ENCODE measurements at regions of chr9 and their contacts with region 1.

Region 1: DNA sequence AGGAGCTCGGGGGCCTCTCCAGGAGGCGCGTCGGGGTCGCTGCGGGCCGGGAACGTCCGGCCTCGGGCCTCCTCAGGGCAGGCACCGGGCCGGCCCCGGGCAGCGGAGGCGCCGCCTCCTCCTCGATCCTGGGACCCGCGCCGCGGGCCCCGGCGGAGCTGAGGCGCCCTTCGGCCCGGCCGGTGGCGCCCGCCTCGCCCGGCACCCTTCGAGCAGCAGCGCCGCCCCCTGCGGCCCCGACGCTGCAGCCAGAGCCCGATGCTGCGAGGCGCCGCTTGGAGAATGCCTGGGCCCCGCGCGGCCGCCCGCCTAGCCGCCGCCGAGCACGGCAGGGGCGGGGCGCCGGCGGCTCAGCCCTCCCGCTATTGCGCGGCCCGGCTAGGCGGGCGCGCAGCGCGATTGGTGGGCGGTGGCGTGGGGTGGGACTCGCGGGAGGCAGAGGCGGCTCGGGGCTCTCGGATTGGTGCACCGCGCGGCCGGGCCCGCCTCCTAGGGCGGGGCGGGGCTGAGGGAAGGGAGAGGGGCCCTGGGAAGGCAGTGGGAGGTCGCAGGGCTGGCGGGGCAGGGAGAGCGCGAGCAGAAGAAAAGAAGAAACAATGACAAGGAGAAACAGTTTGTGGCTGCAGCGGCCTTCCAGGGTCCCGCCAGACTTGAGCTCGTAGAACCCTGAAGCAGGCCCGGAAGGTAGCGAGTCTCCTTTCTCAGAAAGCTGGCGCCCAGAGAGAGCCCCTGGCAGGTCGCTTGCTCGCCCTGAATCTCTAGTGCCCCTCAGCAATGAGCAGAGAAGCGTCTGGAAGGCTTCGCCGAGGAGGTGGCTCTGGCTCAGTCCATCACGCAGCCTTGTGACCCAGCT is at the start of gene EEIG1:
- DNase-seq: peak; percentile 95 to 99 (median 97)
- ATAC-seq: peak; percentile 88
- H3K4me3 ChIP-seq: peak within 1 kb of the TSS; percentile 67
- H3K4me3 Mint-ChIP-seq: peak within 1 kb of the TSS; percentile 96
- H3K27ac ChIP-seq: peak within 1 kb of the TSS; percentile 53 to 57
- H3K27ac Mint-ChIP-seq: peak within 1 kb of the TSS; percentile 99
- H3K4me1 ChIP-seq: peaks cover 58% of the 10 kb centered on the region
- H3K4me1 Mint-ChIP-seq: peaks cover 47% of the 10 kb centered on the region
- H3K27me3 ChIP-seq: no peaks in the 10 kb centered on the region
- H3K27me3 Mint-ChIP-seq: no peaks in the 10 kb centered on the region
- CTCF ChIP-seq: no peak
- total RNA-seq, gene EEIG1: 440 to 463 TPM

Region 2: DNA sequence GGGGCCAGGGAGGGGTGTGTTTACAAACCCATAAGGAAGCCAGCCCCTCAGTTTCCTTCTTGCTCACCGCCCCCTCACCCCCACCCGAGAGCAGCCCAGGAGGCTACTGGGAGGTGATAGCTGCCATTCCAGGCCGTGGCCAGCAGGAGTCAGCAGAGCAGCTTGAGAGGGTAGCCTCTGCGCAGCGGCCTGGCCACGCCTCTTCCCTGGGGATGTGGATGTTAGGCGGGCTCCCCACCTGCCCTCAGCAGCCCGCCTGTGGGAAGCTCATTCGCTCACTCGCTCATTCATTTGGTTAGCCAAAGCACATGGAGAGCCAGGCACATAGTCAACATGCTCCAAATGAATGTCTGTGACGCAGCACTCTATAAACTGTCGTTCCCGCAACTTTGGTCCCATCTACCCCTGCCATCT is 37.2 kb before region 1 on chr9:
- CTCF ChIA-PET with region 1: interaction called, 7 read pairs
- POLR2A ChIA-PET with region 1: interaction called, 5 read pairs
- intact Hi-C with region 1: loop called in 1 of 2 experiments (anchors 2 kb)
- DNase-seq: peak; percentile 59 to 89 (median 72)
- ATAC-seq: peak; percentile 74
- H3K4me3 ChIP-seq: no peak overlapping the region
- H3K4me3 Mint-ChIP-seq: peak overlapping the region; percentile 12
- H3K27ac ChIP-seq: peak overlapping the region in 1 of 2 donors; percentile 14
- H3K27ac Mint-ChIP-seq: peak overlapping the region; percentile 88
- H3K4me1 ChIP-seq: peaks cover 58% of the 10 kb centered on the region
- H3K4me1 Mint-ChIP-seq: peaks cover 58% of the 10 kb centered on the region
- H3K27me3 ChIP-seq: no peaks in the 10 kb centered on the region
- H3K27me3 Mint-ChIP-seq: no peaks in the 10 kb centered on the region
- CTCF ChIP-seq: peak; percentile 77

Region 3: GRCh38 chr9:128007566-128008138 is 26.7 kb after region 1 on chr9:
- CTCF ChIA-PET with region 1: interaction called, 3 read pairs
- POLR2A ChIA-PET with region 1: interaction called, 168 read pairs
- intact Hi-C with region 1: loop called (anchors 1 to 2 kb)
- DNase-seq: peak; percentile 82 to 97 (median 91)
- ATAC-seq: peak; percentile 87
- H3K4me3 ChIP-seq: peak overlapping the region; percentile 37
- H3K4me3 Mint-ChIP-seq: peak overlapping the region; percentile 76
- H3K27ac ChIP-seq: peak overlapping the region; percentile 65 to 97
- H3K27ac Mint-ChIP-seq: peak overlapping the region; percentile 96
- H3K4me1 ChIP-seq: peaks cover 89% of the 10 kb centered on the region
- H3K4me1 Mint-ChIP-seq: peaks cover 81% of the 10 kb centered on the region
- H3K27me3 ChIP-seq: no peaks in the 10 kb centered on the region
- H3K27me3 Mint-ChIP-seq: no peaks in the 10 kb centered on the region
- CTCF ChIP-seq: no peak

Region 4: GRCh38 chr9:128026773-128027541 is 46.0 kb after region 1 on chr9:
- CTCF ChIA-PET with region 1: interaction called, 6 read pairs
- POLR2A ChIA-PET with region 1: interaction called, 1,020 read pairs
- intact Hi-C with region 1: loop called (anchors 1 to 2 kb)
- DNase-seq: peak in 13 of 14 experiments; percentile 30 to 75 (median 48)
- ATAC-seq: peak; percentile 10
- H3K4me3 ChIP-seq: peak overlapping the region; percentile 50
- H3K4me3 Mint-ChIP-seq: peak overlapping the region; percentile 80
- H3K27ac ChIP-seq: peak overlapping the region; percentile 93 to 94
- H3K27ac Mint-ChIP-seq: peak overlapping the region; percentile 94
- H3K4me1 ChIP-seq: peaks cover 100% of the 10 kb centered on the region
- H3K4me1 Mint-ChIP-seq: peaks cover 92% of the 10 kb centered on the region
- H3K27me3 ChIP-seq: no peaks in the 10 kb centered on the region
- H3K27me3 Mint-ChIP-seq: no peaks in the 10 kb centered on the region
- CTCF ChIP-seq: no peak

Region 5: DNA sequence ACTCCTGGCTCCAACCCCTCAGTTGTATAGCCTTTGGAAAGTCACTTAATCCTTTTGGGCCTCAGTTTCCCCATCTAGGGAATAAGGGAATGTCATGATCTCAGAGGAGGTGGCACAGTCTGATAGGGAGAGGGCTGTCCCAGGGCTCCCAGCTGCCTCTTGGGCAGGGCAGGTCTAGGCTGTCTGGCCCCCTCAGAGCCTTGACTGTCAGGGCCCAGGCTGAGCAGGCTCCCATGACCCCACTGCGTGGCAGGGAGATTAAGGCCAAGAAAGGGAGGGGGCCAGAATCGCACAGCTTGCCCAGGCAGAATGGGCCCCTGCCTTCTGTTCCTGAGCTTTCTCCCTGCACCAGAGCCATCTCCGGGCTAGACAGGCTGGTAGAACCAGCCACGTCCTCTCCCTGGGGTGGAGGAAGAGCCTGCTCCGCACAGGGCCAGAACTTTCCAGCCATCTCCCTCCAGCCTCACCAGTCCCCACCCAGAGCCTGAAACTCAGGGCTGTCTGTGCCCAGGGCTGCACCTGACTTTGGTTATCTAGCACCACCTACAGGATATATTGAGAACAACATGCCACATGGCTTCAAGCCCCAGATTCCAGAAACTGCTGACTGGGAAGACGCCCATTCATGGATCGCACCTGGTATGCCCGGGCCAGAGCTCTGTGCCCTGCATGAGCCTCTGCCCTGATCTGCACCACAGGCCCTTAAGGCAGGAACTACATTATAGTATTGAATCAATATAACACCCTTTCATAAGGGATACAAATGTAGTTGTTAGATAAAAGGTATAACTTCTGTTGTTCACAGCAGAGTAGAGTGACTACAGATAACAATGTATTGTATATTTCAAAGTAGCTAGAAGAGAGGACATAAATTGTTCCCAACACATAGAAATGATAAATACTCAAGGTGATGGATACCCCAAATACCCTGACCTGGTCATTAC is 54.2 kb after region 1 on chr9:
- CTCF ChIA-PET with region 1: interaction called, 18 read pairs
- POLR2A ChIA-PET with region 1: interaction called, 1,020 read pairs
- intact Hi-C with region 1: loop called in 1 of 2 experiments (anchors 1 kb)
- DNase-seq: peak; percentile 45 to 90 (median 58)
- ATAC-seq: peak; percentile 42
- H3K4me3 ChIP-seq: no peak overlapping the region
- H3K4me3 Mint-ChIP-seq: peak overlapping the region; percentile 70
- H3K27ac ChIP-seq: peak overlapping the region in 1 of 2 donors; percentile 61
- H3K27ac Mint-ChIP-seq: peak overlapping the region; percentile 78
- H3K4me1 ChIP-seq: peaks cover 54% of the 10 kb centered on the region
- H3K4me1 Mint-ChIP-seq: peaks cover 42% of the 10 kb centered on the region
- H3K27me3 ChIP-seq: no peaks in the 10 kb centered on the region
- H3K27me3 Mint-ChIP-seq: no peaks in the 10 kb centered on the region
- CTCF ChIP-seq: peak; percentile 90